Esophagus squamous epithelium (tissue), 5 donors: ENCODE measurements at regions of chr12 and their contacts with region 1.

Region 1: DNA sequence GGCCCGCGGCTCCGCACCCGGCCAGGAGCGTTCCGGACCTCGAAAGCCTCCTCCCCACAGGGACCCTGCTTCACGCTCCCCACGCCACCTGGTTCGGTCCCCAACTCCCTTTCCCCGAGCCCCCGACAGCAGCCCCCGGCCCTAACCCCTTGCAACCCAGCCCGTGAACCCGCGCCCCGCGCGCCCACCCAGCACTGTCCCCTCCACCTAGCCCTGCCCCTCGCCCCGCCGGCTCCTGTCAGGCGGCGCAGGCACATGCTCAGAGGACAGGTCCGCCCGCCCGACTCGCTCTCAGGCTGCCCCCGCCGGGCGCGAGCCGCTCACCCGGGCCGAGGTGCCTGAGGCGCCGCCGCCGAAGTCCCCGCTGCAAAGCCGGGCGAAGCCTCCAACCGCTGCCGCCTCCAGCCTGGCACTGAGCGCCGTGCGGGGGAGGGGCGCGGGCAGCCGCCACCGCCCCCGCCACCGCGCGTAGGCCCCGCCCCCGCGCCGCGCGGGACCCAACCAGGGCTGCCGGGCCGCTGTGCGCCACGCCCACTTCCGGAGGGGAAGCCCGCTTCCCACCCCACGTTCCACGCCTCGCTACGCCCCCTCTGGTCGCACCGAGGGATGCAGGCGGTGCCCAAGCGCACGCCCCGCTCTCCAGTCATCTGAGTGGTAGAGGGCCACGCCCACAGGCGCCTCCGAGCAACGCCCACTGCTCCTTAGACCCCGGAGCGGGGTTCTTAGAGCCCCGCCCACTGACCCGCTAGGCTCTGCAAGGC is at the start of gene CORO1C:
- DNase-seq: peak; percentile 92
- H3K4me3 ChIP-seq: peak within 1 kb of the TSS; percentile 72 to 98 (median 78)
- H3K27ac ChIP-seq: peak within 1 kb of the TSS; percentile 97 to 99 (median 98)
- H3K4me1 ChIP-seq: peaks cover 12 to 72% (median 25%) of the 10 kb centered on the region in 3 donors
- H3K27me3 ChIP-seq: no peaks in the 10 kb centered on the region
- CTCF ChIP-seq: peak; percentile 66 to 97 (median 92)
- POLR2A ChIP-seq: peak in 3 of 4 donors; percentile 83 to 99 (median 98)
- total RNA-seq, gene CORO1C: 67.2 to 142 (median 114) TPM

Region 2: GRCh38 chr12:108664338-108665258 is 66.7 kb before region 1 on chr12:
- intact Hi-C with region 1: loop called (anchors 10 kb)
- DNase-seq: peak; percentile 57
- H3K4me3 ChIP-seq: peak overlapping the region in 1 of 4 donors; percentile 34
- H3K27ac ChIP-seq: peak overlapping the region; percentile 74 to 93 (median 90)
- H3K4me1 ChIP-seq: peaks cover 29 to 69% (median 53%) of the 10 kb centered on the region in 3 donors
- H3K27me3 ChIP-seq: no peaks in the 10 kb centered on the region
- CTCF ChIP-seq: peak; percentile 83 to 98 (median 93)
- POLR2A ChIP-seq: no peak

Region 3: GRCh38 chr12:108696111-108696995 is 34.9 kb before region 1 on chr12:
- intact Hi-C with region 1: loop called (anchors 5 kb)
- DNase-seq: no peak
- H3K4me3 ChIP-seq: peak overlapping the region in 1 of 4 donors; percentile 42
- H3K27ac ChIP-seq: peak overlapping the region; percentile 75 to 93 (median 91)
- H3K4me1 ChIP-seq: peaks cover 17 to 100% (median 64%) of the 10 kb centered on the region in 3 donors
- H3K27me3 ChIP-seq: no peaks in the 10 kb centered on the region
- CTCF ChIP-seq: no peak
- POLR2A ChIP-seq: no peak

Region 4: DNA sequence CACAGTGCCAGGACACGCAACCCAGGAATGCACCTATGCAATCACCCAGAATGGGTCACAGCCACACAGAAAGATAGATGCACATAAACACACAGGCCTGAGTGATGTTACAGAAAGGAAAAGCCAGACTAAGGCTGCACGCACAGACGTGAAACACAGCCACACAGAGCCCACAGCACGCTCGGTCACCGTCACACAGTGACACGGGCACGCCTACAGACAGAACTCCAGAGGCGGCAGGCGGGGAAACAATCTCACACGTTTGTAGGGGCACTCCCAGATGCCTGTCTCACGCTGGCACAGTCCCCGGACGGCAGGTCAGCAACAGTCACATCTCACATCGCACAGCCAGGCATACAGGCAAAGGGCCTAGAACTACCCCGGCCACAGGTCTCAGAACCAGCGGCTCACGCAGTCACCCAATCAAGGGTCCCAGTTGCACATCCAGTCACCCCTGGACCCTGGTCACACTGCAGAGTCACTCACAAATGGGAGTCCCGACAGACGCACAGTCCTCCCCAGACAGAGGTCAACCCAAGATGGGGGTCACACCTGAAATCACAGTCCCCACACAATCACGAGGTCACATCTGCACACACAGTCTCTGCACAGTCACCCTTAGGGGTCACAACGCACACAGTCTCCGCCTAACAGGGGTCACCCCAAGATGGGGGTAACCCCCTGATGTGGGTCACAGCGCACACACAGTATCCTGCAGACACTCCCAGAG is 125.3 kb after region 1 on chr12:
- intact Hi-C with region 1: loop called (anchors 10 kb)
- DNase-seq: no peak
- H3K4me3 ChIP-seq: peak overlapping the region; percentile 67 to 95 (median 80)
- H3K27ac ChIP-seq: peak overlapping the region; percentile 96 to 99 (median 98)
- H3K4me1 ChIP-seq: peaks cover 34 to 77% (median 43%) of the 10 kb centered on the region in 3 donors
- H3K27me3 ChIP-seq: no peaks in the 10 kb centered on the region
- CTCF ChIP-seq: no peak
- POLR2A ChIP-seq: peak in 2 of 4 donors; percentile 62 to 65

Region 5: DNA sequence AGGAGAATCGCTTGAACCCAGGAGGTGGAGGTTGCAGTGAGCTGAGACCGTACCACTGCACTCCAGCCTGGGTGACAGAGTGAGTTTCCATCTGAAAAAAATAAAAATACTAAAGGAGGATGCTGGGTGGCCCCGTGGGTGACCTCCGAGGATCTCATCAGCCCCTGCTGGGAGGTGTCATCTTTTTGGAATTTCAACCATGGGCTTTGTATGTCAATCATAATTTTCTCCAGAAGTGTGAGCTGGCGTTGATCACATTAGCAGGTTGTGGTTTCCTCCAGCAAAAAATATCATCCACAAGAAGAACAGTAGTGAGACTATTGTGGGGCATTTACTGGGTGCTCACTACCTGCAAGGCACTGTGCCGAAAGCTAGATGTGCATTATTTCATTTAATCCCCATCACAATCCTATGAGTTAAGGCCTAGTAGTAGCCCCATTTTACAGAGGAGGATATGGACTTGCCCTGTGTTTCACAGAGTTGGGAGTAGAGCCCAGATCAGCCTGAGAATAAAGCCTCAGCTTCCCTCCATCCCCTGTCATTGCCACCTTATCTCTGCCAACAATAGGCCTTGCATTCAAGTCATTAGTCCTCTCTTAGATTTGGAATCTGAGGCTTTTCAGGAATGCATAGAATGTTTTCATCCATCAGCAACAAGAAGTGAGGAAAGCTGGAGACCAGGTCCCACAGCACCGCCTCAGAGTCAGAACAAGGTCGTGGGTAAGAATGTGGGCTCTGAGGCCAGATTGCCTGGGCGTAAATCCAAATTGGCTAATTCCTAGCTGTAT is 249.7 kb after region 1 on chr12:
- intact Hi-C with region 1: no loop called
- DNase-seq: no peak
- H3K4me3 ChIP-seq: no peak overlapping the region
- H3K27ac ChIP-seq: no peak overlapping the region
- H3K4me1 ChIP-seq: no peaks in the 10 kb centered on the region
- H3K27me3 ChIP-seq: peaks cover 0 to 7% (median 0%) of the 10 kb centered on the region in 4 donors
- CTCF ChIP-seq: no peak
- POLR2A ChIP-seq: no peak